Gastrocnemius medialis (tissue), 4 donors: ENCODE measurements at regions of chr11 and their contacts with region 1.

Region 1: DNA sequence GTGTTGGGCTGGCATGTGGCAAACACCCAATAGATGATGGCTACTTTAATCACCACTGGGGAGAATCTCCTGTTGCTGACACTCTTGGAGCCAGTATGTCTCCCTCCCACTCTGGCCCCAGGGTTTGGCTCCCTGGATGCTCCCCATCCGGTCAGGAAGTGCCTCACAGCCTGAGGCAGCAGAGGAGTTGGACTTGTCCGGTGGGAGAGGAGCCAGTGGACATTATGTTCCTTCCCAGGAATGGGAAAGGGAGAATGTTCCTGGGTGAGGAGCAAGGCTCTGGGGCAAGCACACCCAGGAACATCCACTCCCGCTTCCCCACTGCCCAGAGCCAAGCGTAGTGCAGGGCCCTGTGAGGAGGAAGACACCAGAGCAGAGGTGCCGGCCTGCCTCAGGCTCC is 84.6 kb upstream of the NAV2 start:
- DNase-seq: peak; percentile 84 to 86
- ATAC-seq: peak; percentile 95 to 97
- H3K4me3 ChIP-seq: no peak overlapping the region
- H3K27ac ChIP-seq: peak overlapping the region; percentile 62 to 76 (median 70)
- H3K4me1 ChIP-seq: peaks cover 9 to 22% of the 10 kb centered on the region in 2 donors
- H3K27me3 ChIP-seq: no peaks in the 10 kb centered on the region
- CTCF ChIP-seq: no peak
- POLR2A ChIP-seq: peak in 1 of 2 donors; percentile 18

Region 2: GRCh38 chr11:19398772-19399527 is 229.1 kb before region 1 on chr11:
- in situ Hi-C with region 1: no loop called
- intact Hi-C with region 1: no loop called
- DNase-seq: peak in 1 of 2 donors; percentile 26
- ATAC-seq: peak; percentile 74 to 76
- H3K4me3 ChIP-seq: no peak overlapping the region
- H3K27ac ChIP-seq: no peak overlapping the region
- H3K4me1 ChIP-seq: no peaks in the 10 kb centered on the region
- H3K27me3 ChIP-seq: no peaks in the 10 kb centered on the region
- CTCF ChIP-seq: no peak
- POLR2A ChIP-seq: no peak

Region 3: DNA sequence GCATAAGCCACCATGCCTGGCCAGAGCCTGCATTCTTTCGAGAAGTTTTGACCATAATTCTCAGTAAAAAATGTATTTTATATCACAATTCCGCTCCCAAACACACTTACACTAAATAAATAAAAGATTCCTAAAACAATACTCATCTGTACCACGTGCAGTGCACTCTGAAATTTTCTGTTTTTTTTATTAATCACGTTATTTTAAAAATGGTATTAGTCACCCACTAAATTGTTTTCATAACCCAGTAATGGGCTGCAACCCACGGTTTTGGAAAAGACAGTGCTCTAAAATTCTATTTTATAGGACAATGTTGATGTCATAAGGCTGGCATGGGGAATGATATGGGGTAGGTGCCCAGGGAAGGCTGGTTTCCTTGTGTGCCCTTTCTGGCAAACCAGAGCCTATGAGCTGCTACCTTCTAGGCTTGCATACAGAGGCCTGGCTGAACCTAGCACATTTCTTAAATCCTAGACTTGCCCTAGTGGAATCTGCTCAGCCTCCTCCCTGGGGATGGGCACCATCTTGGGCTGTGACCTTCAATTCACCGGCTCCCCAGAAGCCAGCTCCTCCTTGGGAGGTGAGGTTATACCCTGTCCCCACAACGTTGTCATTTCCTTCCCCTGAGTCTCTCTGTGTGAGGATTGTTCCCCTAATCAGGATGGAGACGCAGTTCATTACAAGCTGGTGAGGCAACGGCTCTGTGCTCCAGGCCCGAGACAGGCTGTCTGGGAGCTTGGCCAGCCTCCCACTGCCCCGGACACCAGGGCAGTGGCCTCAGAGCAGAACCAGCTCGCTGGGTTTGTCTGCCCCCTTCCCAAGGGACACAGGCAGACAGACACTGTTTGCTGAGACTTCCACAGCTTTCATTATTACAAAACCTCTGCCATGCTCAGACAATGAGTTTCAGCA is 31.9 kb before region 1 on chr11:
- in situ Hi-C with region 1: no loop called
- intact Hi-C with region 1: no loop called
- DNase-seq: peak in 1 of 2 donors; percentile 28
- ATAC-seq: peak in 1 of 2 donors; percentile 26
- H3K4me3 ChIP-seq: no peak overlapping the region
- H3K27ac ChIP-seq: peak overlapping the region in 3 of 4 donors; percentile 9 to 41 (median 15)
- H3K4me1 ChIP-seq: no peaks in the 10 kb centered on the region
- H3K27me3 ChIP-seq: no peaks in the 10 kb centered on the region
- CTCF ChIP-seq: no peak
- POLR2A ChIP-seq: no peak

Region 4: DNA sequence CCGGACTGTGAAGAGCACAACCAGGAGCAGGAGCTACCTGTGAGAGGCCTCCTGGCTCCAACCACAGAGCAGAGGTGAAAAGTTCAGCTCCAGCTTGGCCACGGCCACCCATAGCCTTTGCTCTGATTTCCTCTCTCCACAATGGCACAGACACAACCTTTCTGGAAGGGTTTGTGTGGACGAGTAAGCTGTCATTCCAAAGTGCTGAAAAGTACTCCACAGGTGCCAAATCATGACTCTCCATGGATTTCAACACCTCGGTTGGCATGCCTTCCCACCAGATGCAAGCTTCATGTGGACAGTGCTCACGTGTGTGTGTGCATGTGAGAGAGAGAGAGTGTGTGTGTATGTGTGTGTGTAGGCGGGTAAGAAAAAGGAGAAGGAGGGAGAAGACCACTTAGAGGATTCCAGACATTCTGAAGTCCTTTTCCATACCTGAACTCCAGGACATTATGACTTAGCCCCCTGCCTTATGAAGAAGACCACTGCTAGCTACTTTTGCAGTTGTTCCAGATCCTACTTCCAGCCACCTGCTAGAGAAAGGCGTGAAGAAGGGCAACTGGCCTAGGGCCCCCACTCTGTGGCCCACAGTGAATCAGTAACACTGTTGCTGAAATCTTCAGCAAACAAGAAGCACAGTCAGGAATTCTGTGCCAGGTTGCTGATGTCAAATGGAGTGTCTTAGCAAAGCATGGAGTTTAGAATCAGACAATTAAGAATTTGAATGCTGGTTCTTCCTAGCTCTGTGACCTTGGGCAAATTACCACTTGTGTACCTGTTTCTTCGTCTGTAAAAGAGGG is 70.7 kb after region 1 on chr11:
- in situ Hi-C with region 1: no loop called
- intact Hi-C with region 1: loop called (anchors 1 kb)
- DNase-seq: peak; percentile 88 to 94
- ATAC-seq: peak; percentile 94 to 95
- H3K4me3 ChIP-seq: no peak overlapping the region
- H3K27ac ChIP-seq: peak overlapping the region; percentile 53 to 72 (median 70)
- H3K4me1 ChIP-seq: peaks cover 39 to 40% of the 10 kb centered on the region in 2 donors
- H3K27me3 ChIP-seq: no peaks in the 10 kb centered on the region
- CTCF ChIP-seq: no peak
- POLR2A ChIP-seq: no peak

Region 5: GRCh38 chr11:19712281-19713220 is 84.5 kb after region 1 on chr11 and contains the start of gene NAV2:
- in situ Hi-C with region 1: no loop called
- intact Hi-C with region 1: loop called (anchors 5 kb)
- DNase-seq: peak; percentile 88 to 92
- ATAC-seq: peak; percentile 91 to 92
- H3K4me3 ChIP-seq: peak within 1 kb of the TSS; percentile 64 to 92 (median 76)
- H3K27ac ChIP-seq: peak within 1 kb of the TSS; percentile 83 to 92 (median 90)
- H3K4me1 ChIP-seq: peaks cover 12 to 25% of the 10 kb centered on the region in 2 donors
- H3K27me3 ChIP-seq: peaks cover 19 to 28% (median 22%) of the 10 kb centered on the region in 3 donors
- CTCF ChIP-seq: peak in 2 of 5 experiments; percentile 20 to 32
- POLR2A ChIP-seq: peak; percentile 92 to 98
- total RNA-seq, gene NAV2: 3.2 to 7.7 (median 5.5) TPM